H1 (cell line): ENCODE measurements at regions of chr1 and their contacts with region 1.

Region 1: GRCh38 chr1:41394959-41395956 is 34.0 kb downstream of the FOXO6 start:
- DNase-seq: peak; percentile 75 to 81
- H3K4me3 ChIP-seq: peak overlapping the region in 3 of 4 experiments; percentile 20 to 49 (median 37); a peak in 5 of 8 replicates
- H3K27ac ChIP-seq: no peak overlapping the region
- H3K4me1 ChIP-seq: peaks cover 6 to 46% (median 33%) of the 10 kb centered on the region in 4 experiments
- H3K27me3 ChIP-seq: peaks cover 0 to 5% (median 4%) of the 10 kb centered on the region in 4 experiments; a peak in 4 of 7 replicates
- CTCF ChIP-seq: peak; percentile 26 to 49 (median 36); a peak in 3 of 4 replicates
- EP300 ChIP-seq: no peak
- POLR2A ChIP-seq: no peak
- RAD21 ChIP-seq: peak in 1 of 2 experiments; percentile 14; a peak in 1 of 4 replicates

Region 2: GRCh38 chr1:41366455-41367287 is 28.6 kb before region 1 on chr1:
- CTCF ChIA-PET with region 1: interaction called, 173 read pairs
- POLR2A ChIA-PET with region 1: interaction called, 3 read pairs
- DNase-seq: peak in 1 of 2 experiments; percentile 71
- H3K4me3 ChIP-seq: peak overlapping the region; percentile 30 to 70 (median 52)
- H3K27ac ChIP-seq: no peak overlapping the region
- H3K4me1 ChIP-seq: peaks cover 16 to 62% (median 48%) of the 10 kb centered on the region in 4 experiments
- H3K27me3 ChIP-seq: peaks cover 21 to 50% (median 36%) of the 10 kb centered on the region in 4 experiments
- CTCF ChIP-seq: no peak
- EP300 ChIP-seq: no peak
- POLR2A ChIP-seq: no peak
- RAD21 ChIP-seq: no peak

Region 3: GRCh38 chr1:41371630-41372599 is 23.3 kb before region 1 on chr1:
- CTCF ChIA-PET with region 1: interaction called, 17 read pairs
- POLR2A ChIA-PET with region 1: interaction called, 13 read pairs
- DNase-seq: peak; percentile 80 to 85
- H3K4me3 ChIP-seq: peak overlapping the region in 3 of 4 experiments; percentile 20 to 48 (median 42); a peak in 5 of 8 replicates
- H3K27ac ChIP-seq: no peak overlapping the region; the same call in 1 of the 2 replicates
- H3K4me1 ChIP-seq: peaks cover 15 to 45% (median 34%) of the 10 kb centered on the region in 4 experiments
- H3K27me3 ChIP-seq: peaks cover 0 to 19% (median 7%) of the 10 kb centered on the region in 4 experiments; a peak in 4 of 7 replicates
- CTCF ChIP-seq: no peak
- EP300 ChIP-seq: peak in 1 of 2 experiments; percentile 35; a peak in 1 of 3 replicates
- POLR2A ChIP-seq: no peak
- RAD21 ChIP-seq: peak in 1 of 2 experiments; percentile 4; a peak in 1 of 4 replicates

Region 4: GRCh38 chr1:41381692-41382477 is 13.4 kb before region 1 on chr1:
- CTCF ChIA-PET with region 1: interaction called, 17 read pairs
- POLR2A ChIA-PET with region 1: interaction called, 18 read pairs
- DNase-seq: no peak
- H3K4me3 ChIP-seq: peak overlapping the region; percentile 44 to 72 (median 56)
- H3K27ac ChIP-seq: no peak overlapping the region
- H3K4me1 ChIP-seq: peaks cover 0 to 29% (median 20%) of the 10 kb centered on the region in 4 experiments; a peak in 6 of 7 replicates
- H3K27me3 ChIP-seq: peaks cover 5 to 40% (median 34%) of the 10 kb centered on the region in 4 experiments
- CTCF ChIP-seq: no peak
- EP300 ChIP-seq: no peak
- POLR2A ChIP-seq: no peak
- RAD21 ChIP-seq: no peak

Region 5: GRCh38 chr1:41484372-41485241 is 89.3 kb after region 1 on chr1 and contains the start of gene EDN2:
- CTCF ChIA-PET with region 1: no interaction called
- POLR2A ChIA-PET with region 1: no interaction called
- DNase-seq: no peak
- H3K4me3 ChIP-seq: no peak within 1 kb of the TSS
- H3K27ac ChIP-seq: no peak within 1 kb of the TSS
- H3K4me1 ChIP-seq: peaks cover 13 to 31% (median 24%) of the 10 kb centered on the region in 4 experiments
- H3K27me3 ChIP-seq: peaks cover 0 to 2% (median 0%) of the 10 kb centered on the region in 4 experiments; a peak in 2 of 7 replicates
- CTCF ChIP-seq: peak in 2 of 3 experiments; percentile 64 to 68; a peak in 3 of 4 replicates
- EP300 ChIP-seq: no peak
- POLR2A ChIP-seq: no peak
- RAD21 ChIP-seq: peak; percentile 31 to 45; a peak in 3 of 4 replicates
- total RNA-seq, gene EDN2: 0.39 TPM in 1 of 2 replicates, not detected in the other